ENCODE measurements at regions of chr13 and their contacts with region 1.

Region 1: GRCh38 chr13:40102856-40103255 is 447.4 kb downstream of the COG6 start:
- DNase-seq: peak; percentile 97
- H3K4me3 Mint-ChIP-seq: peak overlapping the region; percentile 66
- H3K27ac Mint-ChIP-seq: peak overlapping the region; percentile 97
- H3K4me1 Mint-ChIP-seq: peaks cover 37% of the 10 kb centered on the region
- H3K27me3 Mint-ChIP-seq: no peaks in the 10 kb centered on the region

Region 2: DNA sequence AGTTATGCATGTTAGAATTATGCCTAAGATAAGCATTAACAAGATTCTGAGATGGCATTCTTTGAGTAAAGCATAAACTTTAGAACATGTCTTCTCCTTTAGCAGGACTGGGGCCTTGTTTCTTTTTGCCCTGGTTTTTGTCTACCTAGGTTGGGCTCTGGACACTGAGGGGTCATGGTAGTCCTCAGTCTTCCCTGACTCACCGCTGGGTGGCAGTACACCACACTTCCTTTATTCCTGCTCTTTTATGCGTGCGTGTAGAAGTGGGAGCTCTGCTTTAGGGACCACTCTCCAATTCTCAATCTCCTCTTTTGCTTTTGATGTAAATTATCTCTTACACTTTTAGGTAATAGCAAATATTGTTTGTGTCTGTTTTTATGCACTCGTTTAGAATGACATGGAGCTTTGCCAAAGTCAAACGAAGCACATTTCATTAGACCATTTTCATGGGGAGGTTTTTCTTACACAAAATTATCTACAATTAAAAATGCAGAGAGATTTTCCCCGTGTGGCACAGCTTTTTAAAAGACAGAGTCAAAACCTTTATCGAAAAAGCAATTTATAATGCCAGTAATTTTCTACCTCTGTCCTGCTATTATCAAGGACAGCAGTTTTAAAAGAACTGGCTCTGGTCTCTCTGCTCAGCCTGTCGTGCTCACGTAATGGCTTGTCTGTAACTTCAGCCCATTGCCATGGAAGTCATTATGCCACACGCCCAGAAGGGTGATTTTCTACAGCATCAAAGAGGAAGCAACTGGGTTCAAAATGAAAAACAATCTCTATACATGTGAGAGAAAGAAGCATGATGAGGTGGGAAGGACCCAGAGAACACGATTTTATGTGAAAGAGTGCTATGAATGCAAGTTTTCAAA is 33.4 kb before region 1 on chr13:
- CTCF ChIA-PET with region 1: interaction called, 9 read pairs
- intact Hi-C with region 1: loop called (anchors 1 kb)
- DNase-seq: peak; percentile 87
- H3K4me3 Mint-ChIP-seq: peak overlapping the region; percentile 12
- H3K27ac Mint-ChIP-seq: peak overlapping the region; percentile 27
- H3K4me1 Mint-ChIP-seq: peaks cover 29% of the 10 kb centered on the region
- H3K27me3 Mint-ChIP-seq: no peaks in the 10 kb centered on the region

Region 3: GRCh38 chr13:40149611-40150274 is 46.9 kb after region 1 on chr13:
- CTCF ChIA-PET with region 1: interaction called, 3 read pairs
- intact Hi-C with region 1: loop called (anchors 1 kb)
- DNase-seq: peak; percentile 37
- H3K4me3 Mint-ChIP-seq: no peak overlapping the region
- H3K27ac Mint-ChIP-seq: peak overlapping the region; percentile 52
- H3K4me1 Mint-ChIP-seq: peaks cover 73% of the 10 kb centered on the region
- H3K27me3 Mint-ChIP-seq: no peaks in the 10 kb centered on the region

Region 4: GRCh38 chr13:40206241-40207000 is 103.6 kb after region 1 on chr13:
- CTCF ChIA-PET with region 1: no interaction called
- intact Hi-C with region 1: loop called (anchors 1 kb)
- DNase-seq: peak; percentile 74
- H3K4me3 Mint-ChIP-seq: peak overlapping the region; percentile 64
- H3K27ac Mint-ChIP-seq: peak overlapping the region; percentile 100
- H3K4me1 Mint-ChIP-seq: peaks cover 73% of the 10 kb centered on the region
- H3K27me3 Mint-ChIP-seq: no peaks in the 10 kb centered on the region

Region 5: DNA sequence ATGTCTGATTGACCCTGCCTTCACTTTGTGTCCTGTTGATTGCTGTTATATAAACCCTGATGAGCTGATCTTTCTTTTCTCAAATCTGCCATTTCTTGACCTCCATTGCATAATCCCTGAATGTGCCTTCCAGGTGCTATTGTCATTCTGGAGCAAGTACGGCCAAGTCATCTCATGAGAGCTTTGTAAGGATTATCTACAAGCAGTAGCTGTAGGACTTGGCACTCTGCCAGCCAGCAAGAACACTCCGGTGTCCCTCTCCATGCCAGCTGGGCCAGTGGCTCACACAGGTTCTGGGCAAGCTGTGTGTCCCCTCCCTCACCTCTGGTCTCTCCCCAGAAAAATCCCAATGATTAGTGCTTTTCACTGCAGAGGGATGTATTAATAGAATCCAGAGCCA is 215.5 kb after region 1 on chr13:
- CTCF ChIA-PET with region 1: no interaction called
- intact Hi-C with region 1: loop called (anchors 2 kb)
- DNase-seq: peak; percentile 23
- H3K4me3 Mint-ChIP-seq: no peak overlapping the region
- H3K27ac Mint-ChIP-seq: no peak overlapping the region
- H3K4me1 Mint-ChIP-seq: peaks cover 64% of the 10 kb centered on the region
- H3K27me3 Mint-ChIP-seq: no peaks in the 10 kb centered on the region

Region 6: DNA sequence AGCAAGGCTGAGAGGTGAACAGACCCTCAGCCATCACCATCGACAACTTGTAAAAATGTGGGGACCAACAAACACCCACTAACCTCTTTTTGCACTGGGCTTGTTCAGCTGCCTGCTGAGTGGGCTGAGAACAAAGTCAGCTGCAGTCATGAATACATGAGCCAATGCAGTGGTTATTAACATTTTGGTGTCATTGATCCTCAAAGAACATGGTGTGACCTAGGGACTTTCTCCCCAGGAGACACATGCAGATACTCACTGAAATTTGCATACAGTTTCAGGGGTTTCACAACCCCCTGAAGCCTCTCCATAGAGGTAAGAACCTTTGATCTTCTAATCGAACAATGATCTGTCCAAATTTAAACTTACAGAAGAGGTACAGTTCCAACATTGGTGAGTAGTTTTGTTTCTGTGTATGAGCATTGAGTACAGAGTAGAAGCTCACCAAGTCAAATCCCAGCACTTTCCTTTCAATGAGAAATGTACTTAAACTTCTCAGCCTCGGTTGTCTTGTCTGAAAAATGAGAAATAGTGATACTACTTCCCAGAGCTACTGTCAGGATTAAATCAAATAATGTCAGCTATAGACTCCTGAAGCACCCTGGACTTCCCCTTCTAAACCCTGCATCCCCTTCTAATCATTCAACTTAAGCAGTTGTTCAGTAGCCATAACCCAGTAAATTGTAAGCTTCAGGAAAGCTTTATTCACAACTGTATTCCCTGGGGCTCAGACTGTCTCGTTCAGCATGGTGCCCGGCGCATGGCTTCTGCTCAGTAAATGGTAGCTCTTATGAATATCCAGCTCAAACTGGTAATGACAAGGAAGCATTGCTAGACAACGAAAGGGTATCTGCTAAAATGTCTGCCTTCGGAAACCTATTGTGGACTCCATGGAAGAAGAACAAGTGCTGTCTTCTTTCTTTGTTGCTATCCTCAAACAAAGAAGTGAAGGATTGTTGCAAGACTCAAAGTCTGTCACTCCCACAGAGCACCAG is 414.9 kb after region 1 on chr13:
- CTCF ChIA-PET with region 1: no interaction called
- intact Hi-C with region 1: loop called (anchors 1 kb)
- DNase-seq: peak; percentile 57
- H3K4me3 Mint-ChIP-seq: peak overlapping the region; percentile 23
- H3K27ac Mint-ChIP-seq: peak overlapping the region; percentile 87
- H3K4me1 Mint-ChIP-seq: peaks cover 78% of the 10 kb centered on the region
- H3K27me3 Mint-ChIP-seq: no peaks in the 10 kb centered on the region